ENCODE measurements at regions of chr10 and their contacts with region 1.

Region 1: GRCh38 chr10:88810196-88810961 is 7.8 kb downstream of the LIPM start:
- DNase-seq: peak; percentile 29
- H3K4me3 ChIP-seq: no peak overlapping the region
- H3K27me3 ChIP-seq: 0 out of 2 replicates have a peak, but pooled peaks cover 2% of the 10 kb centered on the region
- CTCF ChIP-seq: peak; percentile 85

Region 2: GRCh38 chr10:88565072-88565471 is 245.3 kb before region 1 on chr10:
- CTCF ChIA-PET with region 1: interaction called, 16 read pairs
- POLR2A ChIA-PET with region 1: no interaction called
- DNase-seq: no peak
- H3K4me3 ChIP-seq: no peak overlapping the region
- H3K27me3 ChIP-seq: no peaks in the 10 kb centered on the region
- CTCF ChIP-seq: peak; percentile 36

Region 3: DNA sequence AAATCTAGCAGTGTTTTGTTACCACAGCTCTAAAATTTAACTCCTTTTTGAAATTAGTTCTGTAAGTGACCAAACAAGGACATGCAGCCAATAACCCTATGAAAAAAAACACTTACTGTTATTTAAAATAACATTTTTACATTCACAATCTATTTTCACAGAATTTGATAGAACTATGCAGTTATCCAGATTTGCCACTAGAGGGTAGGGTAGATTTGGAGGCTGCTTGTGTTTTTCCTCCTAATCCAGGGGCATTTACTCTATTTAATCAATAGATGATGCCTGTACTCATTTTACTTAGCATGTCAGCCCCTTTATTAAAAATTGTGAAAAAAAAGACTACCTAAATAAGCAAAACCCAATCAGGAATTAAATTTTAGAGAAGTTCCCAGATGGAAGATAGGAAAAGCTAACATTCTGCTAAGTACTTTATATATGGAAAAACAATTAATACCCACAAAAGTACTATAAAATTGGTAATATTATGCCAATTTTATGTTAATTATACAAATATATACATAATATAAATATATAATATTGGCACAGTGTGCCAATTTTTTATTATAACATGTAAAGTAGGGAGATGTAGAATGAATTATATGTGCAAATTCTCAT is 122.4 kb before region 1 on chr10:
- CTCF ChIA-PET with region 1: interaction called, 49 read pairs
- POLR2A ChIA-PET with region 1: no interaction called
- DNase-seq: no peak
- H3K4me3 ChIP-seq: no peak overlapping the region
- H3K27me3 ChIP-seq: no peaks in the 10 kb centered on the region
- CTCF ChIP-seq: peak; percentile 86

Region 4: GRCh38 chr10:88791924-88792323 is 18.5 kb before region 1 on chr10:
- CTCF ChIA-PET with region 1: interaction called, 13 read pairs
- POLR2A ChIA-PET with region 1: no interaction called
- DNase-seq: no peak
- H3K4me3 ChIP-seq: no peak overlapping the region
- H3K27me3 ChIP-seq: peaks cover under 1% of the 10 kb centered on the region; the same call in 1 of the 2 replicates
- CTCF ChIP-seq: peak; percentile 56

Region 5: DNA sequence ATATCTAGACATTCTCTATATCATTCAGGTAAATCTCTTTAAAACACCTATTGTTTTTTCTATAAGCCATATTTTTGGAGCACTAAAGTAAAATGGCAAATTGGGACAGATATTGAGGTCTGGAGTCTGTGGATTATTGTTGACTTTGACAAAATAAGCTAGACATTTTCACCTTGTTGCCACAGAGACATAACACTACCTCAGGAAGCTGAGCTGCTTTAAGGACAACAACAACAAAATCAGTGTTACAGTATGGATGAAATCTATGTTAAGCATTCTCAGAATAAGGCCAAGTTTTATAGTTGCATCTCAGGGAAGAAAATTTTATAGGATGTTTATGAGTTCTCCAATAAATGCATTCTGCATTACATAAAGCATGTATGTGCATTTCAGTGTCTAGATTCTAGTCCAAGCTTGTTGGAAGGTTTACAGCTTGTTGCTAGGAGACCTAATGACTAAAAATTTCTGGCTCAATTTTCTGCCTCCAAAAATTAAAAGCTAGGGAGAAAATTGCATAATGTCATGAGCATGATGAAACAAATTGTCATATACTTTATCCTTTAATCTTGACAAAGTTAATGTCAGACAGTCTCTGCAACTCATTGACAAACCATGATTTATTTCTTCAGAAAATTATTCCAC is 10.5 kb after region 1 on chr10:
- CTCF ChIA-PET with region 1: interaction called, 26 read pairs
- POLR2A ChIA-PET with region 1: no interaction called
- DNase-seq: peak; percentile 77
- H3K4me3 ChIP-seq: no peak overlapping the region
- H3K27me3 ChIP-seq: no peaks in the 10 kb centered on the region
- CTCF ChIP-seq: no peak

Measured in BJ (cell line).